ENCODE measurements at regions of chr3 and their contacts with region 1.

Region 1: GRCh38 chr3:142828703-142829305 is 60.1 kb downstream of the PCOLCE2 start:
- DNase-seq: peak; percentile 51
- H3K4me3 ChIP-seq: no peak overlapping the region
- H3K27ac ChIP-seq: no peak overlapping the region
- H3K27me3 ChIP-seq: no peaks in the 10 kb centered on the region
- CTCF ChIP-seq: peak; percentile 93

Region 2: DNA sequence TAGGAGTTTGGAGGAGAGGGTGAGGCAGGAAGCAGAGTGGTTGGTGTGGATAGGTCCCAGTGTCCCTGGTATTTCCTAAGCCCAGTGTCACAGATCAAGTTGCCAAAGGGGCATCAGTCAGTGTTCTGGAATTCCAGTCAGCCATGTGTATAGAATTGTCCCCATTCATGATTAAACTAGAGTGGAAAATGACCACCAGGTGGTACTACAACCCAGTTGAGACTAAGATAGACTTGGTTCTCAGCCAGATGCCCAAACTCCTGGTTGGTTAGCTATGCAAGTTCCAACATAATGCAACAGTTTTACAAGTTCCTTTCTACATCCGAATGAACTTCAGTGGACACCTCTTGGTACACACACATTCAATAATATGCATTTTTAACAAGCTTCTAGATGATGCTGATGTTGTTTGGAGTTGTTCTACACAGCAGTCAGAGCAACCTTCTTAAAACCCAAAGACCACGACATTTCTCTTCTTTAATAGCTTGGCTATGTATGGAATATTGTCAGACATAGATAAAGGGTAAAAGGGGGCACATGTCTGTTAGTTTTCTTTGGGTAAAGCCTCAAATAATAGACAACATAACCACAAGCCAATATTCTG is 241.9 kb before region 1 on chr3:
- CTCF ChIA-PET with region 1: interaction called, 11 read pairs
- POLR2A ChIA-PET with region 1: no interaction called
- DNase-seq: peak; percentile 32
- H3K4me3 ChIP-seq: no peak overlapping the region
- H3K27ac ChIP-seq: no peak overlapping the region
- H3K27me3 ChIP-seq: no peaks in the 10 kb centered on the region
- CTCF ChIP-seq: peak; percentile 65

Region 3: DNA sequence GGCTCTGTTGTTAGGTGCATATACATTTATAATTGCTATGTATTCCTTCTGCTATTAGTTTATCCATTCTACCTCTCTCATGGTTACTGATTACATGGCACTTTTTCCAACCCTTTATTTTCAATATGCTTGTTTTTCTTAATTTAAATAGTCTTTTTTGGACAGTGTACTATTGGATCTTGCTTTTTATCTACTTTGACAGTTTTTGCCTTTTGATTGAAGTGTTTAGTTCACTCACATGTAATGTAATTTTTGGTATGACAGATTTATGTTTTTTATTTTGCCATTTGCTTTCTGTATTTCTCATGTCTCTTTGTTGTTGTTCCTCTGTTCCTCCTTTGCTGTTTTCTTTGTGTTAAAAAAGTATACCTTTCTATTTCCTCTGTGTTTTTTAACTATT is 60.5 kb before region 1 on chr3:
- CTCF ChIA-PET with region 1: no interaction called
- POLR2A ChIA-PET with region 1: no interaction called
- DNase-seq: no peak
- H3K4me3 ChIP-seq: no peak overlapping the region
- H3K27ac ChIP-seq: no peak overlapping the region
- H3K27me3 ChIP-seq: no peaks in the 10 kb centered on the region
- CTCF ChIP-seq: no peak

Region 4: GRCh38 chr3:142808103-142808917 is 20.5 kb before region 1 on chr3:
- CTCF ChIA-PET with region 1: interaction called, 61 read pairs
- POLR2A ChIA-PET with region 1: no interaction called
- DNase-seq: no peak
- H3K4me3 ChIP-seq: no peak overlapping the region
- H3K27ac ChIP-seq: no peak overlapping the region
- H3K27me3 ChIP-seq: no peaks in the 10 kb centered on the region
- CTCF ChIP-seq: no peak

Region 5: DNA sequence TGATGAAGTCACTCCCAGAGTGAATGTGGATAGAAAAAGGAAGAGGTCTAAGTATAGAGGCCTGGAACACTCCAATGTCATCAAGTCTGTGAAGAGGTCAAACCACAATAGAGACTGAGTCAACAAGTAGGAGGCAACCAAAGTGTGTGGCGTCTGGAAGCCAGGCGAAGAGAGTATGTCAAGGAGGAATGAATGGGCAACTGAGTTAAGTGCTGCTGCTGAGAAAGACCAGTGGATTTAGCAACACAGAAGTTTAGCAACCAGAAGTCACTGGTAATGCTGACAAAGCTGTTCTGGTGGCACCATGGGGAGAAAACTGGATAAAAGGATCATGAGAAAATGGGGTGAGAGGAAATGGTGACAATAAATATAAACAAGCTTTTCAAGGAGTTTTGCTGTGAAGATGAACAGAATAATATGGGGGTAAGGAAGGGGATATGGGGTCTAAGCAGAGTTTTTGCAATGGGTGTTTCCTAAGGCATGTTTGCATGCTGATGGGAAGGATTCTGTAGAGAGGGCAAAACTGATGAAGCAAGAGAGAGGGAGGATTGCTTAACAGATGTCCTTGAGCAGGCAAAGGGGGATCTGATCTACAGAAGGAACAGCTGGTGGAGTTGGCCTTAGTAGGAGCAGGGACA is 21.7 kb after region 1 on chr3:
- CTCF ChIA-PET with region 1: interaction called, 19 read pairs
- POLR2A ChIA-PET with region 1: no interaction called
- DNase-seq: peak; percentile 24
- H3K4me3 ChIP-seq: no peak overlapping the region
- H3K27ac ChIP-seq: no peak overlapping the region
- H3K27me3 ChIP-seq: no peaks in the 10 kb centered on the region
- CTCF ChIP-seq: no peak

Region 6: GRCh38 chr3:142976621-142977398 is 148.0 kb after region 1 on chr3:
- CTCF ChIA-PET with region 1: interaction called, 59 read pairs
- POLR2A ChIA-PET with region 1: no interaction called
- DNase-seq: peak; percentile 85
- H3K4me3 ChIP-seq: no peak overlapping the region
- H3K27ac ChIP-seq: peak overlapping the region; percentile 34
- H3K27me3 ChIP-seq: peaks cover 2% of the 10 kb centered on the region
- CTCF ChIP-seq: no peak

Region 7: GRCh38 chr3:143001369-143002082 is 172.7 kb after region 1 on chr3 and contains the start of gene U2SURP:
- CTCF ChIA-PET with region 1: interaction called, 167 read pairs
- POLR2A ChIA-PET with region 1: interaction called, 3 read pairs
- DNase-seq: peak; percentile 94
- H3K4me3 ChIP-seq: peak within 1 kb of the TSS; percentile 96
- H3K27ac ChIP-seq: peak within 1 kb of the TSS; percentile 97
- H3K27me3 ChIP-seq: no peaks in the 10 kb centered on the region
- CTCF ChIP-seq: 0 out of 2 replicates have a peak, but pooled peaks have one; percentile 12
- polyA plus RNA-seq, gene U2SURP: 51.3 and 71.9 TPM in 2 replicates

Measured in AG04450 (cell line).